ENCODE measurements at regions of chr14 and their contacts with region 1.

Region 1: GRCh38 chr14:60184146-60184904 is 19.1 kb upstream of the DHRS7 start:
- DNase-seq: peak; percentile 22
- CTCF ChIP-seq: peak; percentile 51

Region 2: DNA sequence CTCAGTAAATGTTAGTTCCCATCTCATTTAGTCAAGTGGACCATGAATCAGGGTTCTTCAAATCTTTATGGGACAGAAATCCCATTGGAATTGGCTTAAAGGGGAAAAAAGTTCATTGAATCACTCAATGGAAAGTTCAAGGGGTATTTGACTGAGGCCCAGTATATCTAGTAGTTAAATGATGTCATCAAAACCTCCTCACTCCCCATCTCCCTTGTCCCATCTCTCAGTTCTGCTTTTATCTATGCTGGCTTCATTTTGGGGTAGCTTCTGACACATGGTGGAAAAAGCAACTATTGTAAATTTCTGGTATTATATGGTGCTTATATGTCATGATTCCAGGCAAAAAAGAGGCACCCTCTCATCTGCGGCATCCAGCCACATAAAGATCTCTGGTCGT is 944.0 kb before region 1 on chr14:
- CTCF ChIA-PET with region 1: no interaction called
- POLR2A ChIA-PET with region 1: no interaction called
- DNase-seq: peak; percentile 36
- CTCF ChIP-seq: no peak

Region 3: GRCh38 chr14:59964251-59965007 is 219.9 kb before region 1 on chr14:
- CTCF ChIA-PET with region 1: interaction called, 121 read pairs
- POLR2A ChIA-PET with region 1: no interaction called
- DNase-seq: no peak
- CTCF ChIP-seq: no peak

Region 4: DNA sequence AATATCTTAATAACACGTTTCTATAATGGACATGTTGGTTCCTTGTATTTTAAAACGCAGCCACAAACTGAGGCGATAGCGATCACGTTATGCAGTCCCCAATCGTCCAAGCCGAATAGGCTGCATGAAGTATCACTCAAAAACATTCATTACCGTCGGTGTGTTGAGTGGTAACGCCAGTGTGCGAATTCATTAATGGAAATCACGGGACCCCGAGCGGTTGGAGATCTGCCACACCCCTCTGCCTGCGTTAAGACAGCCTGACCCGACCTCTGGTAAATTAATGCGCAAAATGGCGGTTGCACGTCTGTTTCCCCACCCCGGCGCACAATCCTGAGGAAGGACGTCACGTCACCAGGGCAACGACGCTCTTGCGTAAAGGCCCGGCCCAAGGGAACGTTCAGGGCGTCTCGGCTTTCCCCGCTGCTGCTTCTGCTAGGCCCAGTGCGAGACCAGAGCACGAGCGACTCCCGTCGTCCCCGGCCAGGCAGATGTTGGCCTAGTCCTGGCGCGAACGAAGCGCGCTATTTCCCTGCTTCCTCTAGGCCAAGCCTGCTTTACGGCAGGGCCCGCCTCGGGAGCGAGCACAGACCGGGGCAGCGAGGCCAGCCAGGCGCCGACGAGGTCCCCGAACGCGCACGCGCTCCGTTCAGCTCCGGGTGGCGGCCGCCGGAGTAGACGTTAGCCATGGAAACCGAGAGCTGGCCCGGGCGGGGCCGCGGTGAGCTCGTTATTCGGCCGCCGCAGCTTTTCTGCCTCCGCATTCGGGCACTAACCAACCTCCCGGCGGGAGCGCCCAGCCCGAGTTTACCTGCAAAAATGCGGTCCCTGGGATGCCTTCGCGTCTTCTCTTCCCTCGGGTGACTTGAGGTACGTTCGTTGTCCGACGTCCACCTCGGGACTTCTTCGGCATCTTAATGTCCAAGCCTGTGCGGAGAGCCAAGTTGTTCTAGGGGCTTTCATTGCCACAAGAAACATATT is 92.5 kb before region 1 on chr14 and contains the start of gene PCNX4:
- CTCF ChIA-PET with region 1: interaction called, 12 read pairs
- POLR2A ChIA-PET with region 1: interaction called, 3 read pairs
- DNase-seq: peak; percentile 92
- CTCF ChIP-seq: no peak

Region 5: DNA sequence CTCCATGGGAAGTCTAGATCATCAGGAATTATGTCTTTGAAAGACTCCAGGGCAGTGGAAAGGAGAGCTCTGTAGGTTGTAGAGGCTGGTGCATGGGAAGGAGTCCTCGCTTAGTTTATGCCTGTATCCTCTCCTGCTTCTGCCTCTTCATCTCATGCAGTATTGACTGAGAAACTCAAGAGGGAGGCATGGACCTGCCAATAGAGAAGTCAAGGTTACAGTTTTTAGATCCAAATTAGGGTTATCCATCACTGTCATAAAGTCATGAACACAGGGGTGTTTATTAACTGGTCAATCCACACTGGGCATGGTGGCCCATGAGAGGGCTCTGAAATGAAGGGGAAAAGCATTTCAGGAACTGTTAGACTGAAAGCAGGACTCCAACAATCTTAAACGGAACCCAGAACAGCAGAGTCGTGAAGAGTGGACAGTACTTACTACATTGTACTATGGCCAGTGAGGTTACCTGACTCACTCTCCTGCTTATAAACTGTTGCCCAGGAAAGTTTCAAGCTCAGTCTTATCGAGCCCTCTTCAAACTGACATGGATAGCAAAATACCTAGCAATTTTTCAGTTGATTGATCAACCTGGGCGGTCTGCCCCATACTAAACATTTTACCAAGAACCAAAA is 11.0 kb after region 1 on chr14:
- CTCF ChIA-PET with region 1: interaction called, 25 read pairs
- POLR2A ChIA-PET with region 1: no interaction called
- DNase-seq: no peak
- CTCF ChIP-seq: peak; percentile 56

Region 6: DNA sequence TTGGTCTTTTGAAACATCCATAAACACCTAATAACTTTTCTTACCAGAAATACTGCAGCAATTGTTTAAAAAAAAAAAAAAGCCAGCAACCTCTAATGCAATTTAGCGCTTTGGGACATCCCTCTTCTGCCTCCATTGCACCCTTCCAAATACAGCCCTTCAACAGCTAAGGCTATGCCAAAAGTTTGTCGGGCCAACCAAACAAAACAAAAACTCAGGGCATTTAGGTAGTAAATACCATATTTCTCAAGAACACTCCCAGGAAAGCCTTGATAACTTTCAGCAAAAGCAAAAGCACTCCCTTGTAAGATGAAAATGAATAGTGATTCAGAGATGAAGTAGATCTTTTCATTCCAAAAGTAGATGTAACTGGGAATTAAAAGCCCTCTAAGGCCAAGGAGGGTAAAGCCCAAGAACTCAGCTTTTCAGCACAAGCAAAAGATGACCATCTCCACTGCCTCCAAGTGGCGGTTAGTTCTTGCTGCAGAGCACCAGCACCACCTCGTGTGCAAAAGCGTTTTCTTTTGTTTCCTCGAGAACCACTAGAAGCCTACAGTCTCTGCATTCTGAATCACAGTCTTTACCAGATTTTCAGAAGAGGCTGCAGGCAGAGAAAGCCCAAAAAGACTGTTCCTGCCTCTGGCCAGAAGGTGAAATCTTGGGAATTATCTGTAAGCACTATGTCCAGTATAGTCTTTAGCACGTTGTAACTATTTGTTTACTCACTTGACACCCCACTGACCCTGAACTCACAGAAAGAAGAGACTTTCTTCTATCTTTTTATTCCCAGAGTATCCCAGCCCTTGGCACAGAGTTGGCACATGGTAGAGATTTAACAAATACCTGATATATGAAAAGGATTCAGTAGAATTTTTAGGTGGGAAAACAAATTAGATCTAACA is 377.8 kb after region 1 on chr14:
- CTCF ChIA-PET with region 1: interaction called, 12 read pairs
- POLR2A ChIA-PET with region 1: no interaction called
- DNase-seq: peak; percentile 41
- CTCF ChIP-seq: peak; percentile 85